HepG2 (cell line): ENCODE measurements at regions of chr19 and their contacts with region 1.

Region 1: DNA sequence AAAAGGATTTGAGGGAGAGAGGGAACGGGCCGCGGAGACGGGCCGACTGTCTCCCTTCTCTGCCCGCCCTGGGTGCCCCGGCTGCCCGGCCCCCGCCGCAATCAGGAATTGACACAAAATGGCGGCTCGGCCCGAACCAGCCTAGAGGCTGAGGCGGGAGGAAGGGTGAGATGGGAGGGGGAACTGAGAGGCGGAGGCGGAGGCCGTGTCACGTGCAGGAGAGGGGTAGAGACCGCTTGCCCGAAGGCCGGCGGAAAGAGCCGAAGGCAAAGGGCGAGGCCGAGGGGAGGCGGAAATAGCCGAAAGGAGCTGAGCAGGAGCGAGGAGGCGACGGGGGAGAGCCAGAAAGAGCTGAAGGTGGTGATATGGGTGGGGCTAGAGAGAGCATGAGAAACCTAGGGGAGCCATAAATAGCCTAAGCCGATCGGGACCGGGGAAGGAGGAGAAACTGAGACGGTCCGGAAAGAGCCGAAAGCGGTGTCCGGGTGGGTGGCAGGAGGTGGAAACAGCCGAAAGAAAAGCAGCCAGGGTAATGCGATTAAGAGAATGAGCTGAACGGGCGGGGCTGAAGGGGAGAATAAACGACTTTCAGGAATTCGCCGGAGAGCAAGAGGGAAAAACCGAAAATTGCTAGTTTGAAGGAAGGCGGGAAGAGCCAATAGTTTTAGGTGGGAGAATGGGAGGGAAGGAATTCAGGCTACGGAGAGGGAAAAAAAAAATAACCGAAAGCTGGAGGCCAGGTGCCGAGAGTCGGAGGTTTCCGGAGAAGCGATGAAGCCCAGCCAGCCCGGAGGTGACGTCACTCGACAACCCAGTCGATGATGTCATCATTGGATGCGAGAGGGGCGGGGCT is at the start of gene ZC3H4:
- DNase-seq: peak; percentile 96
- ATAC-seq: peak; percentile 88
- H3K4me3 ChIP-seq: peak within 1 kb of the TSS; percentile 85 to 94 (median 88)
- H3K27ac ChIP-seq: peak within 1 kb of the TSS; percentile 100
- H3K4me1 ChIP-seq: peaks cover 38% of the 10 kb centered on the region
- H3K27me3 ChIP-seq: no peaks in the 10 kb centered on the region; a peak in 1 of 5 replicates
- CTCF ChIP-seq: peak; percentile 0; the same call in 1 of the 2 replicates
- EP300 ChIP-seq: peak in 1 of 2 experiments; percentile 12; a peak in 1 of 4 replicates
- POLR2A ChIP-seq: peak; percentile 76 to 78
- RAD21 ChIP-seq: peak; percentile 24; the same call in 1 of the 2 replicates
- total RNA-seq, gene ZC3H4: 10.7 and 11.2 TPM in 2 replicates

Region 2: GRCh38 chr19:47002107-47002766 is 111.0 kb before region 1 on chr19:
- CTCF ChIA-PET with region 1: no interaction called
- POLR2A ChIA-PET with region 1: no interaction called
- in situ Hi-C with region 1: no loop called
- intact Hi-C with region 1: no loop called
- DNase-seq: no peak
- ATAC-seq: no peak
- H3K4me3 ChIP-seq: no peak overlapping the region
- H3K27ac ChIP-seq: no peak overlapping the region
- H3K4me1 ChIP-seq: peaks cover 28% of the 10 kb centered on the region
- H3K27me3 ChIP-seq: no peaks in the 10 kb centered on the region
- CTCF ChIP-seq: no peak
- EP300 ChIP-seq: no peak
- POLR2A ChIP-seq: 0 out of 4 replicates have a peak, but pooled peaks of 1 of the 2 experiments have one; percentile 1
- RAD21 ChIP-seq: no peak

Region 3: GRCh38 chr19:47047763-47048405 is 65.3 kb before region 1 on chr19:
- CTCF ChIA-PET with region 1: no interaction called
- POLR2A ChIA-PET with region 1: interaction called, 16 read pairs
- in situ Hi-C with region 1: no loop called
- intact Hi-C with region 1: no loop called
- DNase-seq: peak; percentile 93
- ATAC-seq: peak; percentile 89
- H3K4me3 ChIP-seq: peak overlapping the region; percentile 68 to 81 (median 73); a peak in 5 of 6 replicates
- H3K27ac ChIP-seq: peak overlapping the region; percentile 66
- H3K4me1 ChIP-seq: peaks cover 15% of the 10 kb centered on the region
- H3K27me3 ChIP-seq: no peaks in the 10 kb centered on the region
- CTCF ChIP-seq: no peak
- EP300 ChIP-seq: no peak
- POLR2A ChIP-seq: peak; percentile 74 to 86
- RAD21 ChIP-seq: no peak

Region 4: GRCh38 chr19:47081111-47081510 is 32.1 kb before region 1 on chr19:
- CTCF ChIA-PET with region 1: interaction called, 4 read pairs
- POLR2A ChIA-PET with region 1: interaction called, 48 read pairs
- in situ Hi-C with region 1: no loop called
- intact Hi-C with region 1: no loop called
- DNase-seq: no peak
- ATAC-seq: no peak
- H3K4me3 ChIP-seq: no peak overlapping the region
- H3K27ac ChIP-seq: no peak overlapping the region
- H3K4me1 ChIP-seq: peaks cover 7% of the 10 kb centered on the region
- H3K27me3 ChIP-seq: no peaks in the 10 kb centered on the region
- CTCF ChIP-seq: no peak
- EP300 ChIP-seq: no peak
- POLR2A ChIP-seq: no peak
- RAD21 ChIP-seq: no peak

Region 5: GRCh38 chr19:47124937-47125668 is 11.9 kb after region 1 on chr19:
- CTCF ChIA-PET with region 1: no interaction called
- POLR2A ChIA-PET with region 1: interaction called, 27 read pairs
- in situ Hi-C with region 1: no loop called
- intact Hi-C with region 1: no loop called
- DNase-seq: peak; percentile 78
- ATAC-seq: peak; percentile 78
- H3K4me3 ChIP-seq: peak overlapping the region in 1 of 3 experiments; percentile 29; a peak in 2 of 6 replicates
- H3K27ac ChIP-seq: peak overlapping the region; percentile 21
- H3K4me1 ChIP-seq: peaks cover 37% of the 10 kb centered on the region
- H3K27me3 ChIP-seq: no peaks in the 10 kb centered on the region
- CTCF ChIP-seq: peak; percentile 84
- EP300 ChIP-seq: no peak
- POLR2A ChIP-seq: no peak
- RAD21 ChIP-seq: peak; percentile 82

Region 6: GRCh38 chr19:47190167-47190727 is 77.0 kb after region 1 on chr19:
- CTCF ChIA-PET with region 1: no interaction called
- POLR2A ChIA-PET with region 1: interaction called, 14 read pairs
- in situ Hi-C with region 1: no loop called
- intact Hi-C with region 1: no loop called
- DNase-seq: peak; percentile 96
- ATAC-seq: peak; percentile 67
- H3K4me3 ChIP-seq: peak overlapping the region; percentile 36 to 45 (median 43); a peak in 5 of 6 replicates
- H3K27ac ChIP-seq: peak overlapping the region; percentile 83
- H3K4me1 ChIP-seq: peaks cover 65% of the 10 kb centered on the region
- H3K27me3 ChIP-seq: no peaks in the 10 kb centered on the region
- CTCF ChIP-seq: no peak
- EP300 ChIP-seq: peak; percentile 92 to 97; a peak in 3 of 4 replicates
- POLR2A ChIP-seq: peak; percentile 44; a peak in 3 of 4 replicates
- RAD21 ChIP-seq: no peak; the same call in 1 of the 2 replicates

Region 7: DNA sequence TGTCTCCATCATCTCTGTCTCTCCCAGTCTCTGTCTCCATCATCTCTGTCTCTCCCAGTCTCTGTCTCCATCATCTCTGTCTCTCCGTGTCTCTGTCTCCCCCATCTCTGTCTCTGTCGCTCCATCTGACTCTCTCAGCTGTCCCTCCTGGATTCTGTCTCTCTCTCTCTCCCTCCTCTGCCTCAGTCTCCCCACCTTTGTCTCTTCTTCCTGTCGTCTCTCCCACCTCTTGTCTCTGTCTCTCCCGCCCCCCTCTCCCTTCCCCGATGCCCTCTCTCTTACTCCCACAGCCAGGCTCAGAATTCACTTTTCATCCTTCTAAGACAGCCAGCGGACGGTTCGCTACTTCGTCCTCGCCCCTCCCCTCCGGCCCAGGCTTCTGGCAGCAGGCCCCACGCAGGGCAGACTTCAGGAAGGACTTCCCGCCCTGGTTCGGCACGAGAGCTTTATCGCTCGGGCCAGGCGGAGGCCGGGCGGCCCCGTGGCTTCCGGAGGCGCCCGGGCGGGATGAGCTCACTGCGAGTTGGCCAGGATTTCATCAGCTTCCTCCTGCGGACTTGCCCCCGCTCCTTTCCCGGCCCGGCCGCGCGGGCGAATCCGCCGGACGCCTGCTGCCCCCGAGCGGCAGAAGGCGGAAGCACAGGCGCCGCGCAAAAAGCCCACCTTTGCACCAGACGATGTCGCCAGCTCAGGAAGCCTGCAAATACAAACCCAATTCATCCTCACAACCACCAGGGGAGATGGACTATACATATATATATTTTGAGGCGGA is 130.7 kb after region 1 on chr19:
- CTCF ChIA-PET with region 1: no interaction called
- POLR2A ChIA-PET with region 1: interaction called, 30 read pairs
- in situ Hi-C with region 1: no loop called
- intact Hi-C with region 1: no loop called
- DNase-seq: peak; percentile 92
- ATAC-seq: peak; percentile 92
- H3K4me3 ChIP-seq: peak overlapping the region in 2 of 3 experiments; percentile 45 to 46; a peak in 4 of 6 replicates
- H3K27ac ChIP-seq: peak overlapping the region; percentile 46
- H3K4me1 ChIP-seq: peaks cover 54% of the 10 kb centered on the region
- H3K27me3 ChIP-seq: no peaks in the 10 kb centered on the region
- CTCF ChIP-seq: peak; percentile 98
- EP300 ChIP-seq: peak; percentile 51 to 84; a peak in 3 of 4 replicates
- POLR2A ChIP-seq: no peak
- RAD21 ChIP-seq: peak; percentile 99